ENCODE measurements at regions of chr15 and their contacts with region 1.

Region 1: DNA sequence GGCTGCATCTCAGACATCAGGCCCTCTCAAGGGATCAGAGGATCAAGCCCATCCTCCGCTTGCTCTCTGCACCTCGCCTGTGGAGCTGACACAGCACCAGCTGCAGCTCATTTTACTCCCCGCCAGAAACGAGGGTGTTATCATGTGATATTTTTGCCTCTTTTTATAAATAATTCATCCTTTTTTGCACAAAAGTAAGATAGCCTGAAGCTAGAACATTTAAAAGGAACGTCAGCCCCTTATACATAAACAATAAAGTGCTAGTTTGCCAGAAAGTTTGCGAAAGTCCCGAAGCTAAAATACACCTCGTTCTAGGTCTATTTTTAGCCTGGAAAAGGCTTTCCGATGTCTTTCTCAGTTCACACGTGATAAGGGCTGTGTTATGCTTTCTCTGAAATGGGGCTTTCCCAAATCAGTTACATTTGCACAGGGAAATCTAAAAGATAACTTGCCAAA is 9.6 kb upstream of the FAM174B start:
- DNase-seq: peak; percentile 85
- H3K4me3 ChIP-seq: peak overlapping the region in 1 of 4 donors; percentile 18
- H3K27ac ChIP-seq: peak overlapping the region; percentile 62 to 76 (median 70)
- H3K4me1 ChIP-seq: peaks cover 0 to 41% (median 36%) of the 10 kb centered on the region in 4 donors
- H3K27me3 ChIP-seq: no peaks in the 10 kb centered on the region
- CTCF ChIP-seq: no peak
- EP300 ChIP-seq: peak; percentile 29 to 96 (median 71)
- POLR2A ChIP-seq: no peak

Region 2: DNA sequence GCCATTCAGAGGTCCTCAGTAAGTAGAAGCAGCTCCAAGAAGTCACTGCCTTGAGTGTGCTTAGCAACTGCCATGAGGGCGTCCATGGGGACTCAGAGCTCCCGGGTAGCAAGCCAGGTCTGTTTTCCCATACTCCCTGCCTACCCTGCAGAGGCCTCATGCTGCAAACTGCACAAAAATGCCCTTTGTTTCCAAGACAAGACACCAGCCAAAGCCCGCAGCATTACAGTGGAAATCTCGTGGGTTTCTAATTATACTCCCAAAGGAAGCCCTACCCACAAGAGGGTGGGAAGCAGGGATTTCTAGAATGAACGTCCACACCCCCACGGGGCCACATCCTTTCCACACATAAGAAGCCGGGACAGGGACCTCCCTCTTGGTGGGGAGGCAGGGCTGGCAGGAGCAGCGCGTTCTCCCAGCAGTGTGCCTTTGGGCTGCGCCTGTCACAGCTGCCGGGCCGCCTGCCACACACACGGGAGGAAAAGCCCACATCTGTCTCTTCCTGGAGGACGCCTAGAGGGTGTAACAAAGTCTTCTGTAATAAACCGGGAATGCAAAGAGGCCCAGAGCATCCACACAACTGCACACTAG is 40.6 kb before region 1 on chr15:
- intact Hi-C with region 1: loop called (anchors 5 kb)
- DNase-seq: peak; percentile 88
- H3K4me3 ChIP-seq: peak overlapping the region in 1 of 4 donors; percentile 17
- H3K27ac ChIP-seq: peak overlapping the region; percentile 36 to 71 (median 65)
- H3K4me1 ChIP-seq: peaks cover 0 to 38% (median 27%) of the 10 kb centered on the region in 4 donors
- H3K27me3 ChIP-seq: no peaks in the 10 kb centered on the region
- CTCF ChIP-seq: no peak
- EP300 ChIP-seq: no peak
- POLR2A ChIP-seq: no peak

Region 3: GRCh38 chr15:92869997-92870591 is 205.0 kb after region 1 on chr15:
- intact Hi-C with region 1: no loop called
- DNase-seq: peak; percentile 71
- H3K4me3 ChIP-seq: no peak overlapping the region
- H3K27ac ChIP-seq: peak overlapping the region; percentile 68 to 85 (median 78)
- H3K4me1 ChIP-seq: peaks cover 0 to 24% (median 16%) of the 10 kb centered on the region in 4 donors
- H3K27me3 ChIP-seq: no peaks in the 10 kb centered on the region
- CTCF ChIP-seq: no peak
- EP300 ChIP-seq: no peak
- POLR2A ChIP-seq: no peak